PC-9 (cell line): ENCODE measurements at regions of chr17 and their contacts with region 1.

Region 1: DNA sequence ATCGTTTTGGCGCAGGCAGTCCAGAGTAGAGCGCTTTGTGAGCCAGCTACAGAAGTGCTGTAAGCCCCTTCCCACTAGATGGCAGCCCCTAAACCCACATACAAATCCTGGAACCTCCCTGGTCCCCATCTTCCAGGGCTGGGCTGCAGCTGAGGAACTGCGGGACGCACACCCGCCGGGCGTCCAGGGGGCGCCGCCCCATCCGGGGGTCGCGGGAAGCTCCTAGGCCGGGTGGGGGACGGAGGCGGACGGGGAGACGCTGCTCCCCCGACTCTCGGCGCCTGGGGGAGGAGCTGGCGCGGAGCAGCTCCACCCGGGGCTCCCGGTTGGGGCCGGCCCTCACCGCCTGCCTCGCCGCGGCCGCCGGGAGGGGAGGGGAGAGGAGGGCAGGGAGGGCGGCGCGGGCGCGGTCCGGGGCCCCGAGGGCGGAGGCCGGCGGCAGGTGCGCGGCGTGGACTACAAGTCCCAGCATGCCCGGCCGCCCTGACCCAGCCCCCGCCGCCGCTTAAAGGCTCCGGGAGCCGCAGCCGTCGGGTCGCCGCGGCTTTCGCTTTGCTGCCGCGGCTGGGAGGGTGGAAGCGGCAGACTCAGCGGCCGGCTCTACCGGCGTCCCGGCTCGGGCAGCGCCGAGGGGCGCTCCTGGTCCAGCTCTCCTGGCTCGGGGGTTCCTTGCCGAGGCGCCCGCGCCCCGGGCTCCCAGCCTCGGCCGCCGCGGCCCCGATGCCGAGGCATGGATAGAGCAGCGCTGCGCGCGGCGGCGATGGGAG is at the start of gene KSR1:
- DNase-seq: peak; percentile 53 to 83
- H3K4me3 ChIP-seq: peak within 1 kb of the TSS; percentile 84
- H3K27ac ChIP-seq: no peak within 1 kb of the TSS
- H3K4me1 ChIP-seq: peaks cover 18% of the 10 kb centered on the region
- H3K27me3 ChIP-seq: no peaks in the 10 kb centered on the region
- CTCF ChIP-seq: no peak
- total RNA-seq, gene KSR1: 19.1 and 24.6 TPM in 2 replicates

Region 2: GRCh38 chr17:27481327-27481726 is 25.2 kb after region 1 on chr17:
- CTCF ChIA-PET with region 1: interaction called, 12 read pairs
- POLR2A ChIA-PET with region 1: no interaction called
- intact Hi-C with region 1: no loop called
- DNase-seq: no peak
- H3K4me3 ChIP-seq: no peak overlapping the region
- H3K27ac ChIP-seq: no peak overlapping the region
- H3K4me1 ChIP-seq: no peaks in the 10 kb centered on the region
- H3K27me3 ChIP-seq: no peaks in the 10 kb centered on the region
- CTCF ChIP-seq: no peak

Region 3: DNA sequence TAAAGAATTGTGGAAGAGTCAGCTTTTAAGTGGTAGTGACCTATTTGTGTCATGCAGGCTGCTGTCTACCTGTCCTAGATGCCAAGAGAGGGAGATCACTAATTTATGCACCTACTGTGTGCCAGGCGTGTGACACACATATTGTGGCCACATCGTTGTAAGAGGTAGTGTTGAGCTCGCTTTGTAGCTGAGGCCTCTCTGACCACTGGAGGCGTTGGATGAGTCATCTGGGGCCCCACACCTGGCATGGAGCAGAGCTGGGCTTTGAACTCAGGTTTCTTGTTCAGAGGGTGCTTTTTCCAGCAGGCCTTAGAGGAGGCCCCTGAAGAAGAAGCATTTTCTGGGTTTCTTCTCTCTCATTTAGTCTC is 122.6 kb after region 1 on chr17:
- CTCF ChIA-PET with region 1: no interaction called
- POLR2A ChIA-PET with region 1: no interaction called
- intact Hi-C with region 1: loop called (anchors 5 kb)
- DNase-seq: no peak
- H3K4me3 ChIP-seq: no peak overlapping the region
- H3K27ac ChIP-seq: no peak overlapping the region
- H3K4me1 ChIP-seq: peaks cover 37% of the 10 kb centered on the region
- H3K27me3 ChIP-seq: no peaks in the 10 kb centered on the region
- CTCF ChIP-seq: no peak